ENCODE measurements at regions of chr3 and their contacts with region 1.

Region 1: GRCh38 chr3:194134757-194135528 is 1.0 kb upstream of the HES1 start:
- DNase-seq: peak; percentile 97

Region 2: GRCh38 chr3:193788189-193788991 is 346.6 kb before region 1 on chr3:
- intact Hi-C with region 1: loop called (anchors 5 kb)
- DNase-seq: no peak

Region 3: DNA sequence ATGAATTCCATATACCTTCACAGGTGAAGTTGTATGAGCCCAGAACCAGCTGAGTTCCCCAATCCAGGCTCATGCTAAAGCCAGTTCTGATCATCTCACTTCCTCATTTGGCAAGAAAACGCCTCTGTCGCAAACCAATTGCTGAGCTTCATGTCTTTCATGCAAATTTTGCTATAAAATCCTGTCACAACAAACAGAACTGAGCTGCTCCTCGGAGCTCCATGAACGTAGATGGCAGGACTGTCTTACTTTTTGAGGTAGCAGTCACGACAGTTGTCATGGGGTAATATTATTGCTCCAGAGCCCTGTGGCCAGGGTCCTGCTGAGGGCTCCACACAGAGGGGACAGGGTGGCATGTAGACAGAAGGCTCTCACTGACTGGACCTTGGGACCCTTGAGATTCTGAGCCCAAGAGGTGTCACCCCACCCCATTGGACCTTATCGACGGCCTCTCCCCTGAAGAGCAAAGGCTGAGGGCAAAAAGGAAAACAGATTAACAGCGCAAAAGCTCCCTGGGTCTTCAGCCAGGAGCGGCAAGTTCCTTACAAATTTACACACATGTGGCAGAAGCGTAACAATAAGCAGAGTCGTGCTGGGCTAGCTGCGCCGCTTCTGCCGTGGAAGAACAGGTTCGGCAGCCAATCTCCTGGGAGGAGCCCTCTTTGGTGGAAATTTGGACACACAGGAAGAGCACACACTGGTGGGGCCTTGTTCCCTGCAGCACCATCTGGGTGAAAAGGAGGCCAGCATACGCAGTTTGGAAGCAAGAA is 292.7 kb before region 1 on chr3:
- intact Hi-C with region 1: no loop called
- DNase-seq: no peak

Region 4: DNA sequence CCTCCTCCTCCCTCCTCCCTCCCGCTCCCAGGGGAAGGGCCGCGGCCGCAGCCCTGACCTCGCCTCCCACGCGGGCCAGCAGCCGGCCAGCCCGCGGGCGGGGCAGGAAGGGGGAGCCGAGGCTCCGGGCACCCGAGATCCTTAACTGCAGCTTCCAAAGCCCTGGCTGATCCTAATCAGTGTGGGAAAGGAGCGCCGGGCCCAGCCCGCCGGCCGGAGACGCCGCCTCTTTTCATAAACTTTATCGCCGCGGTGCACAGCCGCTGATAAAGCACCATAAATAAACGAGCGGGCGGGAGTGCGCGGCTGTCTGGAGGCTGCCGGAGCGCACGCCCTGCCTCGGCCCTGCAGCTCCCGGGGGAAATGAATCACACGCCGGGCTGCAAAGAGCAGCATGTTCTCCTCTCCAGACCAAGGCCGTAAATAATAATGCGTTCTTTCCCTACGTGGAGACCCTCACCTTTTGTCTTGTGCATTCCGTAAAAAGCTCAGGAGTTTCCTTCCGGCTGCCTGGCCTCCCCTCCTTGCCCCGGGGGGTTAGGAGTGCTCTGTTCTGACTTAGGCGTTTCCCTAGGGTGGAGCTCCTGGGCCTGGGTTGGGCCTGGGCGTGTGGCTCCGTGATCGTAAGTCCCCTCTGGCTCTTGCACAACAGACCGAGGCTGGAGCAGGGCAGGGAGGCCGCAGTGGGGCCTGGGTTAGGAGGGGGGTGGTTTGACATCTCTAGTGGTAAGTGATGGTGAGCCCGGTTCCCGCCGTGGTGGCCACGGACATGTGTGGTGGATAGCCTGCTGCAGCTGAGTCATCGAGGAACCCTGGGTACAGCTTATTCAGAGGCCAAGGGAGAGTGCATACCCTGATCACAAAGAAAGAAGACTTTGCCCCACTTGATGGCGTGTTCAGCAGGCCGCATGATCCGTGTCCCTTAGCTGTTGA is 131.6 kb before region 1 on chr3:
- intact Hi-C with region 1: loop called in 1 of 2 experiments (anchors 5 kb)
- DNase-seq: peak; percentile 98

Region 5: DNA sequence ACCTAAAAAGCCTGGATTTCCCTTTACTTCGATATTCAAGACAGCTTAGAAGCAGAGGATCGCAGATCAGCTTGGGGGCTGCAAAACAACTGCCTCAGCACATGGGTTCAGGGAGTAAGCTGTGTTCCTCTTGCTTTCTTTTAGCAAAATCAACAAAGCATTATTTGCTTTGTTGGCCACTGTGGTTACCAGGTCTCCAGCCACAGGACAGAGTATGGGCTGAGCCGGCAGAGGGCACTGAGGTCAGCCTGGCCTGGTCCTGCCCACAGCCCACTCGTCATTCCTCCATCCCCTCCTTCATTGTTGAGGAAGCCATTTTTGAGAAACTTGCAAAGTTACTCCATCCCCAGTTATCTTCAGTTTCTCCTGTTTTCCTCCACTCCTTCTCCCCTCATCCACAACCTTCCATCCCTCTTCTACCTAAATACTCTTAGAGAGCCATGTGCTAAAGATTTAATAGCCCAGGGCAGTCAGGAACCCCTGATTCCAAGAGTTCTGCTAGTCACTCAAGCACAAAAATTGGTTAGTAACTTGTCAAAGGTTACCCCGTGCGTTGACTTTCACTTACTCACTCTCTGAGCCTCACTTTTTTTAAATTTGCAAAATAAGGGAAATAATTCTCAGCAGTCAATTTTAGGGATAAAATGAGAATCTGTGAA is 59.0 kb before region 1 on chr3:
- intact Hi-C with region 1: loop called in 1 of 2 experiments (anchors 5 kb)
- DNase-seq: no peak

Region 6: DNA sequence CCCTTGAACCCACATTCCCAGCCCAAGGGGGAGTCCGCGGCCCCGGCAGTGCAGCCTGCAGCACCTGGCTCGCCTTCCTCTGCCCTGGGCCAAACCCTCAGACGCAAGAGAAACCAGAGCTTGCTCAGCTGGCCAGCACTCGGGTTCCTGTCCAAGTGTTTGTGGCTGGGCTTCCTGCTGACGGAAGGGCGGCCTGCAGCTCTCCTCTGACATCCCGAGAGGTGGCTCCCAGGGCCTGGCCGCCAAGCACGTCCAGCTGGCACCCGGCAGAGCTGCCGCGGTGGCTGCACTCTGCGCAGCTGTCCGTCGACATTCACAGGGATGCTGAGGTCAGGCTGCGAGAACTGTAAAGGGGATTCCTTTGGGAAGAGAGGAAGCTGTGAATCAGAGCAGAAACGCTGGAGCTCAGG is 130.5 kb after region 1 on chr3:
- intact Hi-C with region 1: loop called in 1 of 2 experiments (anchors 5 kb)
- DNase-seq: peak; percentile 97

Region 7: DNA sequence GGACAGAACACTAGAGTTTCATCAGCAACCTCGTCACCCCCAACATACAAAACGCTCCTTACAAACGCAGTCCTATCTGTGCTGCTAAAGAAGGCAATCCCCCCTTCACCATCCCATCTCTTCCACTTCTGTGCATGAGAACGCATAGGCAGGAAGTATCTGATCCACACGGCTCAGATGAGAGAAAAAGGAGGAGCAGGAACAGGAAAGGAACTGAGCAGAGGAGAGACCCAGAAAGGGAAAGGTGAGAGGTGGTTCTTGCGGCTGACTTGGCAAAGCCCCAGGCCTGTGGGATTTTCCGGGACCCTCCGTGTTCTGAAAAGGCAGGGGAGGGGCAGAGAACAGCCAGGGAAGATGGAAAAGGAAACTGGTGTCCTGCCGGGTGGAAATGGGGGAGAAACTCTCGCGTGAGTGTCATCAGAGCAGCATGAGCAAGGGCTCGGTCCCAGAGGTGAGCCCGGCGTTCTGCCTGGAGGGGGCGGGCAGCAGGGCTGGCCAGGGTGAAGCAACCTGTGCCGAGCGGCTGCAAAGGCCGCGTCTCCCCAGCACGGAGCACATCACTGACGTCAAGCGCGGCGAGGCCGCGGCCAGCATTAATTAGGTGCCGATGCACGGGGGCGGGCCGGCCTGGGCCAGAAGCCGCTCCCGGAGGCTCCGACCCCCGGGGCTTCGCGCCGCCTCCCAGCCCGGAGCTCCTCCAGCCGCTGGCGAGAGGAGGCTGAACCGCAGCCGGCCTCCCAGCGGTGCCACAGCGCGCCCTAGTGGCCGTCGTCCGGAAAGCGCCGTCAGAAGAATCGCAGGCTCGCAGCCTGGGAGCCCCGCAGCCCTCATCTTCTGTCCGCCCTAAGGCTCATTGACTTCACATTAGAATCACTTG is 180.4 kb after region 1 on chr3:
- intact Hi-C with region 1: loop called (anchors 2 to 5 kb)
- DNase-seq: peak; percentile 97